Ascending aorta (tissue), 2 donors: ENCODE measurements at regions of chr5 and their contacts with region 1.

Region 1: DNA sequence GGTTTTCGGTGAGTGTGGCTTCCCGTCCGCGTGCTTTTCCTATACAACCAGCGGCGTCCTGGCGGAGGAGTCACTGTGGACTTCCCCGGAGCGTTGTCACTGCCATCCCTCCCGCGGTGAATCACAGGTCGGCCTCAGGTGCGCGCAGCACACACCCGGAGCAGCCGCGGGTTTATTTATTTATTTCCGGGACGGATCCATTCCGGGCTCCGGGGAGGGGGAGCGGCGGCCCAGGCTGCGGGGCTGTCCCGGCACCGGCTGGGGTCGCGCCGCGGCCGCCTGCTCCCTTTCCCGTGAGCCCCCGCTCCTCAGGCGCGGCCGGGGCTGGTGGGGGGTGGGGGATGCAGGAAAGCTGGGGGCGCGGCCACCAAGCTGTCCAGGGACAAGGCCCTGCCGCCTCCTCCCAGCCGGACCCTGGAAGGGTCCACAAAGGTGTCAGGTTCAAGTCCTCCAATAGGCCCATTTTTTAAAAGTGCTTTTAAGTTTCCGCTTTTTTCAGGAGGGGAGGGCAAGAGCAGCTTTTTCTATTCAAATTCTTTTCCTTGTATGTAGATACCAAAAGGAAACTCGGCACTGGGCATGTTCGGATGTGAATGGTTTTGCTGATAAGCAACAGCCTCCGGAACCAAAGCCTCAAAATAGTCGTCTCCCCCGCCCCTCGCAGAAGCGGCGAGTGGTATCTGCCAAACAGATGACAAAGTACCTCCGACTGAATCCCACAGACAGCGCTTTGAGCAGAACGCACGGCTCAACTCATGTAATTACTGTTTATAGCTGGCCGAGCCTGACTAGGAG is 192.5 kb downstream of the CD180 start:
- DNase-seq: peak; percentile 67 to 94
- H3K4me3 ChIP-seq: peak overlapping the region; percentile 76 to 83
- H3K27ac ChIP-seq: peak overlapping the region; percentile 92 to 93
- H3K4me1 ChIP-seq: peaks cover 7 to 27% of the 10 kb centered on the region in 2 donors
- H3K27me3 ChIP-seq: no peaks in the 10 kb centered on the region
- CTCF ChIP-seq: no peak

Region 2: GRCh38 chr5:66945389-66946349 is 58.5 kb before region 1 on chr5:
- intact Hi-C with region 1: no loop called
- DNase-seq: no peak
- H3K4me3 ChIP-seq: no peak overlapping the region
- H3K27ac ChIP-seq: no peak overlapping the region
- H3K4me1 ChIP-seq: no peaks in the 10 kb centered on the region
- H3K27me3 ChIP-seq: no peaks in the 10 kb centered on the region
- CTCF ChIP-seq: no peak

Region 3: GRCh38 chr5:66958980-66959641 is 45.0 kb before region 1 on chr5:
- intact Hi-C with region 1: loop called (anchors 5 kb)
- DNase-seq: peak in 1 of 2 donors; percentile 71
- H3K4me3 ChIP-seq: peak overlapping the region; percentile 40 to 66
- H3K27ac ChIP-seq: peak overlapping the region; percentile 45 to 56
- H3K4me1 ChIP-seq: peaks cover 0 to 9% of the 10 kb centered on the region in 2 donors
- H3K27me3 ChIP-seq: no peaks in the 10 kb centered on the region
- CTCF ChIP-seq: no peak

Region 4: DNA sequence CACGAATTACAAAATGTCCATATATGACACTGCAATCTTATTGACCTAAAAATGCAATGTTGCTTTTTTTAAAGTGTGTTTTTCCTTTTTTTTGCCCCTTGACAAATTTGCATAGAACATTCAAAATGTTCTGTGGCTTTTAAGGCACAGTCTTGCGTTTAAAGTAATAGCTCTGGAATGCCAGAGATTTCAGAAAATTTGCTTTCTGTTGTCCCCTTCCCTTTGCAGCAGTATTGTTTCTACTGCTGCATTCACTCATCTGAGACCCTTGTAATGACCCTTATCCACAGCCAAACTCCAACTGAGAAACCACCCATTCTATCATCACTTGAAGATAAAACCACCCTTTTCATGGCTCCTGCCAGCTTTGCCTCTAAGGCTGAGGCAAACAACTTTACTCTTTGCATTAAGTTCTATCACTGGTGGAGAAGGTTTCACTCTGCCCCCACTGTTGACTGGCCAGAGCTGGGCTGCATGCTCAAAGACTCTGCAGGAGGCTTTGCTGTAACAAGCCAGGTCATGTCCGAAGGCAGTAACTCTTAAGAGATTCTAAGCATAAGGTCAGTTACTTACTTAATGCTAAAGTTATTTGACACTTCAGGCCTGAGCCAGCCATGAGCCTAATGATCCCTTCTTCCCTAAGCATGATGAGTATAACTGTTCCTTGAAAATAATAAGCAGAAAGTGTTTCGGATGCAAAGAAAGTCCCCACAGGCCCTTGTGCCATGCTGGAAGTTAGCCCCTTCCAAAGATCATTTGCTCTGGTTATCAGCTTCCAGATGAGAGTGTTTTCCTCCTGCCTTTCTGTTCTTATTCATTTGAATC is 90.6 kb after region 1 on chr5:
- intact Hi-C with region 1: loop called (anchors 5 kb)
- DNase-seq: no peak
- H3K4me3 ChIP-seq: peak overlapping the region; percentile 9 to 15
- H3K27ac ChIP-seq: peak overlapping the region; percentile 68 to 85
- H3K4me1 ChIP-seq: peaks cover 8 to 32% of the 10 kb centered on the region in 2 donors
- H3K27me3 ChIP-seq: no peaks in the 10 kb centered on the region
- CTCF ChIP-seq: no peak